Dorsolateral prefrontal cortex (tissue), 120 donors: ENCODE measurements at regions of chr2 and their contacts with region 1.

Region 1: GRCh38 chr2:171160119-171160955 is at the start of gene TLK1:
- DNase-seq: peak; percentile 38 to 77 (median 62)
- H3K4me3 ChIP-seq: peak within 1 kb of the TSS; percentile 65 to 92 (median 81)
- H3K27ac ChIP-seq: peak within 1 kb of the TSS; percentile 57 to 98 (median 93)
- H3K27me3 ChIP-seq: no peaks in the 10 kb centered on the region
- CTCF ChIP-seq: peak in 1 of 56 donors; percentile 9
- total RNA-seq, gene TLK1: 42.9 to 119 (median 84.6) TPM

Region 2: DNA sequence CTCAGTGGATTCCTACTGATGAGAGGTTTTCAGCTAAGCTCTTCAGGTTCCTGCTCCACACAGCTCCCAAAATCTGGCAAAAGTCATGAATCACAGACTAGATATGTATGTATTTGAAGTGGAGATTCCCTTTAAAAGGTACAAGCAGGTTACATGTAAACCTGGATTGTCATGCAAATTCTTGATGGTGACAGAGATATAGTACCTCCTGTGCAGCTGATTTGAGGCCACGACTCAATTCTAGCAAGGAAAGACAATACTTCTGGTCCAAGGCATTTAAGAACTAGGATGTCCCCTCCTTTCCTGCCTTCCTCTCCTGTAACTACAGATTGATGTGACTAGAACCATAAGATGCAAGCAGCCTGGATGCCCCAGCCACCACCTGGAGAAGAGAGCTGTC is 176.3 kb before region 1 on chr2:
- intact Hi-C with region 1: no loop called
- DNase-seq: no peak
- H3K4me3 ChIP-seq: no peak overlapping the region
- H3K27ac ChIP-seq: no peak overlapping the region
- H3K27me3 ChIP-seq: no peaks in the 10 kb centered on the region
- CTCF ChIP-seq: no peak

Region 3: DNA sequence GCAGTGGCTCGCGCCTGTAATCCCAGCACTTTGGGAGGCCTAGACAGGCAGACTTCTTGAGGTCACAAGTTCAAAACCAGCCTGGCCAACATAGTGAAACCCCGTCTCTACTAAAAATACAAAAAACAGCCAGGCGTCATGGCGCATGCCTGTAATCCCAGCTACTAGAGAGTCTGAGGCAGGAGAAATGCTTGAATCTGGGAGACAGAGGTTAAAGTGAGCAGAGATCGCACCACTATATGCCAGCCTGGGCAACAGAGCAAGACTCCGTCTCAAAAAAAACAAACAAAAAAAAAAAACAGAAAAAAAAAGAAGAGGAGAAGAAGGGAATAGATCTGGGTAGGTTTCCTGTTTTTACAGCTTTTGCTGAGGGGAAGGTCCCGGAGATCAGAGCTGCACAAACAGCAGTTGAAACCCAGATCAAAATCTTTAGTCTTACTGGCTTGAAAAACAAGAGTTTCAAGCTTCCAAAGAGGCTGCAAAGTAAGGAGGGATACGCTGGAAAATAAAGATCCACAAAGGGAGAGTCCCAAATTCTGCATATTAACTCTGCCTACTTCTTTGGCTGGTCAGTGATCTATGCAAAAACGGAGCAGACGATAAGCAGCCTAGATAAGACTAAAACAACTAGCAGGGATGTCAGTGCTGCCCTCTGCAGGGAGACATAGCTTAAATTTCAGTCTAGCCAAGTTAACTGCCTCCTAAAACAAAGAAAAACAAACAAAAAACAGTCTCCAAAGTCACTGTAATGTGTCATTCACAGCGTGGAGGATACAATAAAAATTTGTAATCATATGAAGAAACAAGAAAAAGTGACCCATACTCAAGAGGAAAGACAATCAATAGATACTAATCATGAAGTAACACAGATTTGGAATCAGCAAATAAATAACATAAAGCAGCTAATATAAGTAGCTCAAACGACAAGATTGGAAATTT is 73.7 kb before region 1 on chr2:
- intact Hi-C with region 1: loop called in 1 of 2 experiments (anchors 5 kb)
- DNase-seq: peak in 2 of 10 donors; percentile 14 to 41
- H3K4me3 ChIP-seq: peak overlapping the region in 19 of 59 donors; percentile 4 to 37 (median 23)
- H3K27ac ChIP-seq: peak overlapping the region in 1 of 59 donors; percentile 36
- H3K27me3 ChIP-seq: no peaks in the 10 kb centered on the region
- CTCF ChIP-seq: peak in 55 of 56 donors; percentile 22 to 75 (median 59)

Region 4: GRCh38 chr2:171319164-171319810 is 158.9 kb after region 1 on chr2:
- intact Hi-C with region 1: loop called in 1 of 2 experiments (anchors 2 kb)
- DNase-seq: no peak
- H3K4me3 ChIP-seq: peak overlapping the region in 18 of 59 donors; percentile 1 to 52 (median 22)
- H3K27ac ChIP-seq: peak overlapping the region; percentile 48 to 97 (median 87)
- H3K27me3 ChIP-seq: no peaks in the 10 kb centered on the region
- CTCF ChIP-seq: no peak

Region 5: DNA sequence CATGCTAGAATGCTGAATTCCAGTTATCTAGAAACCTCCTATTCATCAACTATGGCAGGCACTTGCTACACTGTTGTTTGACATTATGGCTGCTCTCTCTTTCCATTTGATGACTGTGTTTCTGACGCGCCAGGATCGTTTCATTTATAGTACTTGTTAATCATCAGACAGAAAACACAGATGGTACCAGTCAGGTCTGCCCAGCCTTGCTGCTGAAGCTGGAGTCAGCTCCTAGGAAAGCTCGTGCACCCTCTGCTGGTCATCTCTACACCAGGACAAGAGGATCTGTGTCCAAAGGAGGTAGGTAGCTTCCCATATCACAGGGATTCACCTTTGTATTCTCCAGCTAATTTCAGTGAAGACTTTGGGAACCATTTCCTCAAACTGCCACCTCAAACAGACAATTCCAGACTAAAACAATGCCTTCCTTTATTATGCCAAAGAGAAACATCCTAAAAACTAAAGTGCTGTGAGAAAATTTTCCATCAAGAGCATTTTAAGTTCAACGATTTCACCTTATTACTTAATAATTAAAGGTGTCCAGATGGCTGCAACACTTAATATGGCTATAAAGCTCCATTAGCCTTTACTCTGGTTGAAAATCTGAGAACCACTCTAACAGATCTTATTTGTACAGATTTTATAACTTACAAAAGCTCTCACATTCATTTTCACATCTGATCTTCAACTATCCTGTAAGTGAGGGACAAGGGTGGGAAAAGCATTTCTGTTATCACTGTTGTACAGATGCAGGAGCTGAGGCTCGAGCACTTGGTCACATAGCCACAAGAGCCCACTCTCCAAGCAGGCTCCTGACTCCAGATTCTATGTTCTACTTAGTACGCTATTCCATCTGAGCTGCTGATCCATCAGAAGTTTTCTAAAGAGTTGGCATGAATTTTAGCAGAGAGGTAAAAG is 255.9 kb after region 1 on chr2:
- intact Hi-C with region 1: loop called (anchors 2 to 5 kb)
- DNase-seq: peak; percentile 50 to 96 (median 90)
- H3K4me3 ChIP-seq: peak overlapping the region in 9 of 59 donors; percentile 4 to 26 (median 12)
- H3K27ac ChIP-seq: peak overlapping the region in 48 of 59 donors; percentile 1 to 85 (median 54)
- H3K27me3 ChIP-seq: no peaks in the 10 kb centered on the region
- CTCF ChIP-seq: peak; percentile 67 to 94 (median 85)

Region 6: DNA sequence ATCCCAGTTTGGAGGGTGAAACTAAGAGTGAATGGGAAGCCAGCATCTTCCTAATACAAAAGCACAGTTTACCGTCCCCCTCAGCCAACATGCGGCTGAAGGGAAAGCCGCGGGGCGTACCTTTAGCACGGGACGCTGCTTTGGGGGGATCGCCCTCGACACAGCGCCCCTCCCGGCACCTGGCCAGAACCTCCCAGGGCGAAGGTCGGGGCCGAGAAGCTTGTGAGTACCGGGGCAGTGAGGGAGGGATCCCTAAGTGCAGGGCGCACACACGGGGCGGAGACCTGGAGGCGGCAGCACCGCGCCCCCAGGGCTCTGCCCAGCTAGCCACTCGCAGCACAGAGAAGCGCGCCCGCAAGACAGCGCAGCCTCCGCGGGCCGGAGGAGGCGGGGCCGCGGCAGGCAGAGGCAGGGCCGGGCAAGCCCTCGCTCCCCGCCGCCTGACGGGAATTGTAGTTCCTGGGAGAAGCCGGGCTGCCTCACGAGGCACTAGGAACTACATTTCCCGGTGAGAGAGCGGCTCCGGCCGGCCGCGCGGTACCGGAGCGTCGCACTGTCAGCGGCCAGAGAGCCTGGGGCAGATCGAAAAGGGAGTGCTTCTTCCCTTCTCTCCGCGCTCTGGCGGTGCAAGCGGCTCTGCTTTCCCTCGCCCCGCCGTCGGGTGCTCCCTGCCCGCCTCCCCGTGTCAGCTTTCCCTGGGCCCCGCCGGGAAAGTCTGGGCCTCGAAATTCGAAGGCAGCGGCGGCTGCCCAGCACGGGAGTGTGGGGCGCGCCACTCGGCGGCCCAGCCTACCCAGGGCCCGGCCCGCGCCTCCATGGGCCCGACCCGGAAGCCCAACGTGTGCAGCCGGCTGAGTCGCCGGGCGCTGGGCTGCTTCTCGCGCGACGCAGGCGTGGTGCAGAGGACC is 273.7 kb after region 1 on chr2 and contains the starts of genes DCAF17 and METTL8:
- intact Hi-C with region 1: loop called (anchors 5 kb)
- DNase-seq: peak; percentile 91 to 98 (median 96)
- H3K4me3 ChIP-seq: peak within 1 kb of the TSS; percentile 67 to 99 (median 88)
- H3K27ac ChIP-seq: peak within 1 kb of the TSS; percentile 80 to 99 (median 96)
- H3K27me3 ChIP-seq: no peaks in the 10 kb centered on the region
- CTCF ChIP-seq: peak; percentile 18 to 81 (median 62)
- total RNA-seq, gene DCAF17: 15.9 to 42.0 (median 28.0) TPM
- total RNA-seq, gene METTL8: 14.3 to 33.4 (median 21.6) TPM